ENCODE measurements at regions of chr6 and their contacts with region 1.

Region 1: DNA sequence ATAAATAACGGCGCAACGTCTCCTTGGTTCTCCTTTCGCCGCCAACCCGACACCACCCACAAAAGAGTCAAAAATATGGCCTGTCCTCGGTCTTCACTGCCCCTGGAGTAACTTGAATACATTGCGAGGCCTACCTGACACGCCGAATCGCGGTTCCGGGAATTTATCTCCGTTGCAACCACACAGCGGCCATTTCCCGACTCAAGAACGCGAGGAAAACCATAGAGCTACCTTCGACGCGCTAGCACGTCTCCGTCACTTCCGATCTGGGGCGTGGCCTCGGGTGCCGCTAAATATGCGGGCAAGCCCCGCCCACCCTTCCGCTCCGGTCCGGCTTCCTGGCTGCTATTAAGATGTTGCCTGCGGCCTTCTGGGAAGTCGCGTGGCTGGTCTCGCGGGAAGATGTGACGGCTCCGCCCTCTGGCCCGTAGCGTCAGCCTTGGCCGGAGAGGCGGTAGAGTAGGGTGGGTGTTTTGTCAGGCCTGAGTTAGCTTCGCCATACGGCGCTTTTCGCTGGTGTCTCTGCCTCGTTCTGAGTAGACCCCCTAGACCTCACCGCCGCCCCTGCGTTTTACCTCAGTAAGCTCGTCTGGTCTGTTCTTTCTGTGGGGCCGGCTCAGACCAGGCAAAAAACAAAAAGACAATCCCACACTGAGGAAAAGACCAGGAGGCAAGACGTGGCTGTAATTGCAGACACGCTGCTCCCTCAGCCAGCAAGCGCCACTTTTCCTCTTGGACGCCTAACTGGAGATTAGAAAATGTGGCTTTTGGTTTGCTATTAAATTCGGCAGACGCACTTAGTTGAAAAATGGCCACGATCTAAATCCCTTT is at the start of gene BCLAF1:
- DNase-seq: peak; percentile 100
- total RNA-seq, gene BCLAF1: 81.5 TPM

Region 2: DNA sequence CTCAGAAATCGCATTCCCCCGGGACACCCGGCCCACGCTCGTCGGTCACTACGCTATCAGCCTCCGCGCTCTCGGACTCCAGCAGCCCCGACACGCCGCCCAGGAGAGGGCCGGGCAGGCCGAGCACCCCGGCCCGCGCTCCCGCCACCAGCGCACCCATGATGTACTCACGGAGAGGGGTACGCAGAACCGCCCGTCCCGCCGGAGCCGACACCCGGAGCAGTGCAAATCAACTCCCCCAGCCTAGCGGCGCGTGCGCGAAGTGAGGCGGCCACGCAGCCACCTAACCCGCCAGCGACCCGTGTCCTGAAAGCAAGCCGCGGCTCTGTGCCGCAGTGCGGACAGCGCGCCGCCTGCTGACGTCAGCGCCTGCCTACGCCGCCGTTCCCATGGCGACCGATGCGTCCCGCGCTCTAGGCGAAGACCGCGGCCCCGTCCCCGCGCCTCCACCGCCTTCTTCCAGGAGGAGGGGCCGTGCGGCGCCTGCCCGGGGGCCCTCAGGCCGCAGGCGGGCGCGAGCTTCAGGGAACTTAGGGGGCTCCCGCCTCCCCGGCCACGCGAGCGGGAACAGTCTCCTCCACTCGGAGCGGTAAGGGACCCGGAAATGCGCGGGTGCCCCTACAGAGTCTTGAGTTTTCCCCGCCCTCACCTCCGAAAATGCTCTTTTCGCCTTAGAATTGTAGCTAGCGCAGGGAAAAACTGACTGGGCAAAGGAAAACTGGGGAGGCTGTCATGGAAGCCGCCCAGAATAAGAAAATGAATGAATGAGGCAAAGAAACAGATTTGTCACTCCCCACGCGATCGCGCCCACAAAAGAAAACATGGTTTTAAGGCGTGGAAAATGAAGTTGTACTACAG is 792.2 kb before region 1 on chr6 and contains the start of gene AHI1:
- intact Hi-C with region 1: loop called (anchors 2 kb)
- DNase-seq: peak; percentile 96
- total RNA-seq, gene AHI1: 13.3 TPM

Region 3: GRCh38 chr6:135880066-135880972 is 409.5 kb before region 1 on chr6:
- intact Hi-C with region 1: no loop called
- DNase-seq: no peak

Measured in cardiac septum (tissue), 1 donor.